GM12878 (cell line): ENCODE measurements at regions of chrX and their contacts with region 1.

Region 1: GRCh38 chrX:120477453-120477852 is 8.4 kb upstream of the LAMP2 start:
- DNase-seq: no peak
- ATAC-seq: no peak
- H3K4me3 ChIP-seq: no peak overlapping the region
- H3K27ac ChIP-seq: no peak overlapping the region
- H3K4me1 ChIP-seq: no peaks in the 10 kb centered on the region
- H3K27me3 ChIP-seq: no peaks in the 10 kb centered on the region
- CTCF ChIP-seq: no peak
- EP300 ChIP-seq: no peak
- POLR2A ChIP-seq: no peak
- RAD21 ChIP-seq: no peak

Region 2: GRCh38 chrX:120125444-120125843 is 352.0 kb before region 1 on chrX:
- CTCF ChIA-PET with region 1: no interaction called
- POLR2A ChIA-PET with region 1: no interaction called
- RAD21 ChIA-PET with region 1: no interaction called
- SMC1A ChIA-PET with region 1: no interaction called
- in situ Hi-C with region 1: no loop called
- intact Hi-C with region 1: no loop called
- DNase-seq: no peak
- ATAC-seq: peak; percentile 20; the same call in 2 of the 3 replicates
- H3K4me3 ChIP-seq: no peak overlapping the region
- H3K27ac ChIP-seq: no peak overlapping the region
- H3K4me1 ChIP-seq: no peaks in the 10 kb centered on the region
- H3K27me3 ChIP-seq: no peaks in the 10 kb centered on the region
- CTCF ChIP-seq: no peak
- EP300 ChIP-seq: no peak
- POLR2A ChIP-seq: no peak
- RAD21 ChIP-seq: no peak

Region 3: DNA sequence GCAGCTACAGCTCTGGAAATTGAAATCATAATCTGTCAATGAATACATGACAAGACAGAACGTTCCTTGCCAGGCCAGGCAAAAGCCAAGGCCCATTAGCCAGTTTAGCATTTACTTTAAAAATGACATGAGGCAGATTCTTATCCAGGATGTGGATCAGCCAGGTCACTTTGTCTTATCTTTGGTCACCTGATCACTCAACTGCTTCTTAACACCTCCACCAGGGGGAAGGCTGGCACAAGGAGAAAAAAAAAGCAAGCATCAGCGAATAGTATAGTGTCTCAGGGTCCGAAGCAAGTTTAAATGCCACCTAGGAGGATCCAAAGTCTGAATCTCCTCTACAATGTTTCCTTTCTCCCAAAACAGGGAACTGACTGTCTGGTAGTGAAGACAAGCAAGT is 96.8 kb before region 1 on chrX:
- CTCF ChIA-PET with region 1: interaction called, 7 read pairs
- POLR2A ChIA-PET with region 1: no interaction called
- RAD21 ChIA-PET with region 1: no interaction called
- SMC1A ChIA-PET with region 1: interaction called, 4 read pairs
- in situ Hi-C with region 1: no loop called
- intact Hi-C with region 1: loop called (anchors 2 kb)
- DNase-seq: no peak
- ATAC-seq: peak; percentile 86
- H3K4me3 ChIP-seq: no peak overlapping the region
- H3K27ac ChIP-seq: no peak overlapping the region
- H3K4me1 ChIP-seq: no peaks in the 10 kb centered on the region
- H3K27me3 ChIP-seq: no peaks in the 10 kb centered on the region; a peak in 1 of 4 replicates
- CTCF ChIP-seq: peak; percentile 38 to 49 (median 46); a peak in 5 of 6 replicates
- EP300 ChIP-seq: no peak
- POLR2A ChIP-seq: no peak
- RAD21 ChIP-seq: peak; percentile 63